ENCODE measurements at regions of chr1 and their contacts with region 1.

Region 1: GRCh38 chr1:36285448-36286101 is 20.6 kb upstream of the SH3D21 start:
- DNase-seq: peak; percentile 77 to 93 (median 80)
- ATAC-seq: peak; percentile 95
- H3K4me3 ChIP-seq: no peak overlapping the region
- H3K27ac ChIP-seq: no peak overlapping the region
- H3K4me1 ChIP-seq: no peaks in the 10 kb centered on the region
- H3K27me3 ChIP-seq: no peaks in the 10 kb centered on the region
- CTCF ChIP-seq: peak; percentile 77 to 91 (median 81)
- EP300 ChIP-seq: no peak
- POLR2A ChIP-seq: no peak
- RAD21 ChIP-seq: peak; percentile 88 to 93

Region 2: DNA sequence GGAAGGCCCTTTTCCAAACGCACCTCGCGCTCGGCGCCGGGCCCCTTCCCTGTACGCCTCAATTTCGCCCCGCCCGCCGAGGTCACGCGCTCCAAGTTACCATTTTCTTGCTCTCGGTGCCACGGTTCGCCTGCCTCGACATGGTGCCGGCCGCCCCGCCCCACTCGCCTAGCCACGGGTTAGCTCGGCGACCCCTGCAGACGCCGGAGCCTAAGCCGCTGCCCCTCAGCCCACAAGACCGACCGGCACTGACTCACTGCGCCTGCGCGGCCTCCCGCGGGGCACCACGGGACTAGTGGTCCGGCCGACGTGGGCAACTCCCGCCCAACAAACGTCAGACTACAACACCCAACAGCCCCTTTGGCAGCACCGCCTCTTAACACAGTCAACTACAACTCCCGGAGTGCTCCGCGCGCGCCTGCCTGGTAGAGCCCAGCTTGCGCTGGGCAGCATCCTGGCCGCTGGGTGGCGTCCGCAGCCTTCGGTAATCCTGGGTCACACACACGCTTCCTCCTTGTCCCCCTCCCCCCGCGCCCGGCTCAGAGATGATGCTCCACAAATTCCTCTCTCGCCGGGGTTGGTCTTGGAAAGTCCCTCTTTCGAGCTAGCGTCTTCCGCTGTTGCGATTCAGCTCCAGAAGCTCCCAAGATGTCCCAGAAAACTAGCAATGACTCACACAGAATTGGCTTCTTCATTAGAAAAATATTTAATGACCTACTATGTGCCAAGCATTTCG is 136.2 kb before region 1 on chr1 and contains the start of gene TRAPPC3:
- CTCF ChIA-PET with region 1: interaction called, 50 read pairs
- POLR2A ChIA-PET with region 1: interaction called, 20 read pairs
- in situ Hi-C with region 1: loop called (anchors 5 kb)
- intact Hi-C with region 1: loop called (anchors 1 kb)
- DNase-seq: peak; percentile 98 to 100 (median 99)
- ATAC-seq: peak; percentile 95
- H3K4me3 ChIP-seq: peak within 1 kb of the TSS; percentile 69
- H3K27ac ChIP-seq: peak within 1 kb of the TSS; percentile 87
- H3K4me1 ChIP-seq: peaks cover 31 to 34% of the 10 kb centered on the region in 2 experiments
- H3K27me3 ChIP-seq: no peaks in the 10 kb centered on the region
- CTCF ChIP-seq: peak; percentile 97 to 99 (median 99)
- EP300 ChIP-seq: peak; percentile 43; the same call in 1 of the 2 replicates
- POLR2A ChIP-seq: peak; percentile 95
- RAD21 ChIP-seq: peak; percentile 99 to 100
- polyA plus RNA-seq, gene TRAPPC3: 20.6 to 41.8 TPM

Region 3: GRCh38 chr1:36217670-36218069 is 67.9 kb before region 1 on chr1:
- CTCF ChIA-PET with region 1: no interaction called
- POLR2A ChIA-PET with region 1: no interaction called
- in situ Hi-C with region 1: no loop called
- intact Hi-C with region 1: loop called (anchors 2 kb)
- DNase-seq: peak in 1 of 4 experiments; percentile 23
- ATAC-seq: peak; percentile 49; the same call in 1 of the 3 replicates
- H3K4me3 ChIP-seq: no peak overlapping the region
- H3K27ac ChIP-seq: no peak overlapping the region
- H3K4me1 ChIP-seq: peaks cover 8 to 11% of the 10 kb centered on the region in 2 experiments
- H3K27me3 ChIP-seq: no peaks in the 10 kb centered on the region
- CTCF ChIP-seq: peak in 1 of 3 experiments; percentile 44; a peak in 2 of 6 replicates
- EP300 ChIP-seq: no peak
- POLR2A ChIP-seq: no peak
- RAD21 ChIP-seq: peak in 1 of 2 experiments; percentile 31; a peak in 2 of 4 replicates